ENCODE measurements at regions of chr20 and their contacts with region 1.

Region 1: DNA sequence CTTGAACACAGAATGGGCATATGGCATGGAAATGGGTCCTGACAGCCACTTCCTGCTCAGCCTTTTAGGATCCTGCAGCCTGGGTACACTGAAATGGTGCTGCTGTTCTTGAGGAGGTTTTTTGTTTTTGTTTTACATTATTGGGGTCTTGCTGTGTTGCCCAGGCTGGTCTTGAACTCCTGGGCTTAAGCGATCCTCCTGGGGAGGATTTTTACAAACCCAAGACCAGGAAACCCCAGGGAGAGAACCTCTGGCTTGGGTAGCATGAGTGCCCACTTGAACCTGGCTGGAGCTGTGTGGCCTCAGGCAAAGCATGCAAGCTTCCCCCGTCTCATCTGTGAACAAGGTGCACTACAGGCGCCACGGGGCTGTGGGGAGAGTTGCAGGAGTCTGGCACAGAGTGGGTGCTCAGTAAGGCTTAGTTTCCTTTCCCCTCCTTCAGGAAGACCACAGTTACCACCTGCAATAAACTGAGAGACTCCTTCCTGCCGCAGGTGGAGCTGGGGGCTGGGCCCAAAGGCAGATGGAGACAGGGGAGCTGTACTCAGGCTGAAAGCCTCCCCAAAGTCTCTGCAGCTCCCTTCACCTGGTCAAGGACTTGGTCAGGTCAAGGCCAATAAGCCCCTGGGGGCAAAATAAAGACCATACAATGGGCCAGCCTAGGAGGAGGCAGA is 1.8 kb downstream of the SLA2 start:
- DNase-seq: no peak
- H3K4me3 ChIP-seq: no peak overlapping the region
- H3K27ac ChIP-seq: no peak overlapping the region
- H3K4me1 ChIP-seq: peaks cover 10% of the 10 kb centered on the region
- H3K27me3 ChIP-seq: no peaks in the 10 kb centered on the region
- CTCF ChIP-seq: no peak

Region 2: GRCh38 chr20:36629719-36630681 is 14.2 kb before region 1 on chr20:
- CTCF ChIA-PET with region 1: no interaction called
- dilution Hi-C with region 1: no loop called
- in situ Hi-C with region 1: no loop called
- intact Hi-C with region 1: no loop called
- DNase-seq: no peak
- H3K4me3 ChIP-seq: no peak overlapping the region
- H3K27ac ChIP-seq: no peak overlapping the region
- H3K4me1 ChIP-seq: no peaks in the 10 kb centered on the region
- H3K27me3 ChIP-seq: no peaks in the 10 kb centered on the region
- CTCF ChIP-seq: no peak

Region 3: GRCh38 chr20:36717657-36718056 is 73.5 kb after region 1 on chr20:
- CTCF ChIA-PET with region 1: no interaction called
- dilution Hi-C with region 1: loop called (anchors 5 kb)
- in situ Hi-C with region 1: no loop called
- intact Hi-C with region 1: no loop called
- DNase-seq: no peak
- H3K4me3 ChIP-seq: no peak overlapping the region
- H3K27ac ChIP-seq: no peak overlapping the region
- H3K4me1 ChIP-seq: no peaks in the 10 kb centered on the region
- H3K27me3 ChIP-seq: no peaks in the 10 kb centered on the region
- CTCF ChIP-seq: peak; percentile 18 to 47

Region 4: GRCh38 chr20:36872852-36873251 is 228.7 kb after region 1 on chr20:
- CTCF ChIA-PET with region 1: interaction called, 15 read pairs
- dilution Hi-C with region 1: no loop called
- in situ Hi-C with region 1: no loop called
- intact Hi-C with region 1: no loop called
- DNase-seq: no peak
- H3K4me3 ChIP-seq: no peak overlapping the region
- H3K27ac ChIP-seq: no peak overlapping the region
- H3K4me1 ChIP-seq: no peaks in the 10 kb centered on the region
- H3K27me3 ChIP-seq: no peaks in the 10 kb centered on the region
- CTCF ChIP-seq: no peak

Measured in mammary epithelial cell (primary cell).